ENCODE measurements at regions of chr3 and their contacts with region 1.

Region 1: GRCh38 chr3:50272911-50273693 is 4.2 kb downstream of the SEMA3B start:
- DNase-seq: peak; percentile 65 to 82 (median 80)
- H3K4me3 ChIP-seq: peak overlapping the region in 5 of 7 experiments; percentile 35 to 73 (median 44)
- H3K27ac ChIP-seq: no peak overlapping the region
- H3K4me1 ChIP-seq: peaks cover 0 to 33% (median 25%) of the 10 kb centered on the region in 4 experiments
- H3K27me3 ChIP-seq: peaks cover 0 to 63% (median 22%) of the 10 kb centered on the region in 5 experiments

Region 2: DNA sequence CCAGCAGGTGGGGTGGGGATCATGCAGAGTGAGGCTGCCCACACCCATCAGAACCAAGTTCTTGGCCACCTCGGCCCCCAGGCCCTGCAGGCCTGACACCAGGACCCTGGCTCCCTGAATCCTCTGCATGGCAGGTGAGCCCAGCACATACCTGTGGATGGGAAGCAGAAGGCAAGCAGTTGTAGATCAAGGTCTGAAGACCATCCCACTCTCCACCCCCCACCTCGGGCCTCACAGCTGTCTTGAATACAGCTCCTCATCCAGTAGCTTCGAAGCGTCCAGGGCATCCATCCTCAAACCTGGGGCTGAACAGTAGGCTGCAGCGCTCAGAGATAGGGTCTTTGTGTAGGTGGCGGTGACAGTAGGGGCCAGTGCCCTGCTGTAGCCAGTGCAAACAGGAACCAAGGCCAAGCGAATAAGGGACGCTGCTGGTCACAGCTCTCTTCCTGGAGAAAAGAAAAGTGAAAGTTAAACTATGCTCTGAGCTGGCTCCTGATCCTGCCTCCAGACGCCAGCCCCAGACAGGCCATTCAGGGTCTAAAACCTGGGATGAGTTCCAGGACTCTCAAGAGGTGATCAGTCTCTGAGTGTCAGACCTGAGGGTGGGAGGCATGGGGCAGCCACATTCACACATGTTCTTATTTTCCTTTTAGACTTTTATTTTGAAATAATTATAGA is 459.5 kb before region 1 on chr3 and contains the start of gene UBA7:
- CTCF ChIA-PET with region 1: no interaction called
- POLR2A ChIA-PET with region 1: no interaction called
- DNase-seq: peak in 2 of 3 donors; percentile 69 to 77
- H3K4me3 ChIP-seq: peak within 1 kb of the TSS; percentile 34 to 87 (median 74)
- H3K27ac ChIP-seq: peak within 1 kb of the TSS; percentile 78 to 92
- H3K4me1 ChIP-seq: peaks cover 8 to 71% (median 60%) of the 10 kb centered on the region in 4 experiments
- H3K27me3 ChIP-seq: no peaks in the 10 kb centered on the region

Region 3: GRCh38 chr3:50290124-50290641 is 17.1 kb after region 1 on chr3:
- CTCF ChIA-PET with region 1: interaction called, 10 read pairs
- POLR2A ChIA-PET with region 1: no interaction called
- DNase-seq: no peak
- H3K4me3 ChIP-seq: no peak overlapping the region
- H3K27ac ChIP-seq: no peak overlapping the region
- H3K4me1 ChIP-seq: peaks cover 3 to 25% (median 19%) of the 10 kb centered on the region in 4 experiments
- H3K27me3 ChIP-seq: no peaks in the 10 kb centered on the region

Region 4: GRCh38 chr3:50519471-50520089 is 246.5 kb after region 1 on chr3:
- CTCF ChIA-PET with region 1: no interaction called
- POLR2A ChIA-PET with region 1: no interaction called
- DNase-seq: peak; percentile 61 to 79 (median 76)
- H3K4me3 ChIP-seq: no peak overlapping the region
- H3K27ac ChIP-seq: no peak overlapping the region
- H3K4me1 ChIP-seq: peaks cover 9 to 23% (median 20%) of the 10 kb centered on the region in 4 experiments
- H3K27me3 ChIP-seq: no peaks in the 10 kb centered on the region

Region 5: GRCh38 chr3:50530001-50530970 is 257.2 kb after region 1 on chr3:
- CTCF ChIA-PET with region 1: no interaction called
- POLR2A ChIA-PET with region 1: no interaction called
- DNase-seq: no peak
- H3K4me3 ChIP-seq: no peak overlapping the region
- H3K27ac ChIP-seq: no peak overlapping the region
- H3K4me1 ChIP-seq: peaks cover 0 to 5% (median 2%) of the 10 kb centered on the region in 4 experiments
- H3K27me3 ChIP-seq: peaks cover 3 to 36% (median 13%) of the 10 kb centered on the region in 5 experiments

Region 6: DNA sequence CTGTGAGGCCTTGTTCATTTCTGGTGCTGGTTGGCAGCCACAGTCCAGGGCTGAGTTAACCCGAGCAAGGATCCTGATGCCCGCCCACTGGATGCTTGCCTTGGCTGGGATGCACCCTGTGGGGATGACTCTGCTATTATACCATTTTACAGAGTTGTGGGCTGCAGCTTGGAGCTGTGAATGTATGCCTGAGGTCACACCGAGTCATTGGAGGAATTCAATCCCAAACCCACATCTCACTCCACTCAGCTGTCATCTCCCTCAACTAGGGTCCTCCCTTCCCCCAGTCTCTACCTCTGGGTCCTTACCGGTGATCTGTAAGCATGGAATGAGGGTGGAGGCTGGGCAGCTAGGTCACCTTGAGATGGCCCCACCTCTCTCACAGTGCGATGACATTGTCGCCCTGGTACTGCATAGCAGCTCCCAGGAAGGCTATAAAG is 366.0 kb after region 1 on chr3:
- CTCF ChIA-PET with region 1: no interaction called
- POLR2A ChIA-PET with region 1: no interaction called
- DNase-seq: no peak
- H3K4me3 ChIP-seq: no peak overlapping the region
- H3K27ac ChIP-seq: no peak overlapping the region
- H3K4me1 ChIP-seq: peaks cover 0 to 43% (median 32%) of the 10 kb centered on the region in 4 experiments
- H3K27me3 ChIP-seq: no peaks in the 10 kb centered on the region